ENCODE measurements at regions of chr20 and their contacts with region 1.

Region 1: GRCh38 chr20:10893331-10893730 is 219.5 kb upstream of the JAG1 start:
- DNase-seq: no peak

Region 2: GRCh38 chr20:10864076-10864918 is 29.0 kb before region 1 on chr20:
- intact Hi-C with region 1: loop called in 1 of 2 experiments (anchors 1 kb)
- DNase-seq: no peak

Region 3: DNA sequence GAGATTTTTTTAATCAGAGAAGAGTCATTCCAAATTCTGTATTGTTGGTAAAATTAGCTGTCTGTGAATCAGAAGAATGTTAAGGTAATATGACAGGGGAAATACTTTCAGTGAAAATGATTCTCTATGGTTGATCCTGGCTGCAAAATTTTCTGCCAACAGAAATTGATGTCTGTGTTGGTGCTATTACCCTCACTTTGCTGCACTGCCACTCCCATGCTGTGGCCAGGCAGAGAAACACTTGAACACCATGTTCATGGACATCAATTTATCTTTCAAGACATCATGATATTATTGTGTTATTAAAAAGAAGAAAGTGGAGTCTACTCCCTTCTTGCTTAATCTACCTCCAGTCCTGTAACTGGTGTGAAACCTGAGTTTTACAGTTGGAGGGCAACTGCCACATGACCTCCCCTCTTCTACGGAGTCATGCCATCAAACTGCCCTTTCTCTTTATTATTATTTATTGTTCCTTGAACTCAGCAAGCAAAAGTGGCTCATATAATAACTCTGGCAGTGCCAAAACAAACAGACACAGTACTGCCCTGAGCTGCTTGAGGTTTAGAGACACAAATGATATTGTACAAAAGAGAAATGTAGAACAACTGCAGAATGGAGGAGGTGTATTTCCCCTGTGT is 68.4 kb after region 1 on chr20:
- intact Hi-C with region 1: no loop called
- DNase-seq: no peak

Measured in posterior vena cava (tissue), 2 donors.